Caco-2 (cell line): ENCODE measurements at regions of chr11 and their contacts with region 1.

Region 1: GRCh38 chr11:61639816-61640443 is 40.3 kb upstream of the DAGLA start:
- DNase-seq: no peak
- H3K4me3 ChIP-seq: no peak overlapping the region
- H3K4me3 Mint-ChIP-seq: no peak overlapping the region
- H3K27ac Mint-ChIP-seq: no peak overlapping the region
- H3K4me1 ChIP-seq: 0 out of 2 replicates have a peak, but pooled peaks cover 4% of the 10 kb centered on the region
- H3K4me1 Mint-ChIP-seq: no peaks in the 10 kb centered on the region
- H3K27me3 ChIP-seq: no peaks in the 10 kb centered on the region
- H3K27me3 Mint-ChIP-seq: no peaks in the 10 kb centered on the region
- CTCF ChIP-seq: no peak

Region 2: GRCh38 chr11:61509043-61510029 is 130.6 kb before region 1 on chr11:
- CTCF ChIA-PET with region 1: interaction called, 10 read pairs
- POLR2A ChIA-PET with region 1: no interaction called
- intact Hi-C with region 1: no loop called
- DNase-seq: peak; percentile 82 to 87
- H3K4me3 ChIP-seq: peak overlapping the region; percentile 52
- H3K4me3 Mint-ChIP-seq: peak overlapping the region; percentile 80
- H3K27ac Mint-ChIP-seq: no peak overlapping the region
- H3K4me1 ChIP-seq: peaks cover 37% of the 10 kb centered on the region
- H3K4me1 Mint-ChIP-seq: peaks cover 27% of the 10 kb centered on the region
- H3K27me3 ChIP-seq: no peaks in the 10 kb centered on the region
- H3K27me3 Mint-ChIP-seq: peaks cover 5% of the 10 kb centered on the region
- CTCF ChIP-seq: peak; percentile 59 to 71

Region 3: DNA sequence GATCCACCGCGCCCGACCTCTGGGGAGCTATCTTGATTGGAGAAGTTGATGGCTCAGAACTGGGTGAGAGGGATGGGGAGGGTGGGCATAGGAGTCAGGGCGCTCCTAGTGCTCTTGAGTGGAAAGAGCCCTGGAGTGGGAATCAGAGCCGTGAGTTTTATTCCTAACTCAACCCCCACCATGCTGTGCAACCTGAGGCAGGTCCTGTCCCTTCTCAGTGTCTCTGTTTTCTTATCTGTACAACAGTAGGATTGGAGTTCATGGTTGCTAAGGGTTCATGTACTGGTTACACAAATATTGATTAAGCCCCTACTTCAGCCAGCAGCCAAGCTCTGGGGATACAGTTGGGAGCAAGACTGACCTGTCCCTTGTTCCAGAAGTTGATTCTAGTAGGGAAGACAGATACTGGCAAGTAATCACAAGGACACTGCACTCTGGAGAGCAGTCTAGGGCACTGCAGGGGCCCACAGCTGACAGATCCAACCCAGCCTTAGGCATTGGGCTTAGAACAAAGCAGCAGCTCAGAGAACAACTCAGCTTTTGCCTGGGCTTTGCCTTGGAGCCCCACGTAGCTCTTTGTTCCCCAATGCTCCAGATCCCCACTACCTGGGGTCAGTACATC is 27.9 kb after region 1 on chr11:
- CTCF ChIA-PET with region 1: interaction called, 11 read pairs
- POLR2A ChIA-PET with region 1: interaction called, 4 read pairs
- intact Hi-C with region 1: no loop called
- DNase-seq: peak; percentile 43 to 54
- H3K4me3 ChIP-seq: peak overlapping the region; percentile 47
- H3K4me3 Mint-ChIP-seq: peak overlapping the region; percentile 84
- H3K27ac Mint-ChIP-seq: peak overlapping the region; percentile 88
- H3K4me1 ChIP-seq: peaks cover 46% of the 10 kb centered on the region
- H3K4me1 Mint-ChIP-seq: peaks cover 21% of the 10 kb centered on the region
- H3K27me3 ChIP-seq: no peaks in the 10 kb centered on the region
- H3K27me3 Mint-ChIP-seq: no peaks in the 10 kb centered on the region
- CTCF ChIP-seq: peak; percentile 24 to 36

Region 4: DNA sequence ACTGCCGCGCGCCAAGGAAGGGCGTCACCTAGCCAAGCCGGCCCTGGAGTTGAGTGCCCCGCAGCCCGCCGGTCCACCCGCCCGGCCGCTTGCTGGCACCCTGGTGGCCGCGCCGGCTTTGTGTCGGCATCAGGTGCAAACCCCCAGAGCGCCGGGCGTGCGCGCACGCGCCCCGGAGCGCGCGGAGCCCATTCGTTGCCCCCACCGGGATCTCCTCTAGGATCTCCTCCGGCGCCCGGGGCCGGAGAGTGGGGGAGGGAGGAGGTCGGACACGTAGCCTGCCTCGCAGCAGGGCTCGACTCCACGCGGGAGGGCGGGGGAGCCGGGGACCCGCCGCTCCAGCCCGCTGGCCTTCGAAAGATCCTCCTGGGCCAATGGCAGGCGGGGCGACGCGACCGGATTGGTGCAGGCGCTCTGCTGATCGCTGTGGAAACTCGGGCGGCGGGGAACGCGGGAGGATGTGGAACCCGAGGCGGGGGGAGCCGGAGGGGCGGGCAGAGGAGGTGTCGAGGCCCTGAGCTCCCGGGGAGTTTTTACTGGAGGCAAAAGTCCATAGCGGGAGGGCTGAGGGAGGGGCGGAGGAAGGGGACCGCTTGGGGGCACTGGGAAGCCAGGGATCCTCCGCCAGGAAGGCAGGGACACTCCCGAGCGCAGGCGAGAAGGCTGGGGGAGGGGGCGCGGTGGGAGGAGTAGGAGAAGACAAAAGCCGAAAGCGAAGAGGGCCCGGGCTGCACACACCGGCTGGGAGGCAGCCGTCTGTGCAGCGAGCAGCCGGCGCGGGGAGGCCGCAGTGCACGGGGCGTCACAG is 187.8 kb after region 1 on chr11 and contains the start of gene FADS2:
- CTCF ChIA-PET with region 1: no interaction called
- POLR2A ChIA-PET with region 1: no interaction called
- intact Hi-C with region 1: no loop called
- DNase-seq: peak; percentile 75 to 77
- H3K4me3 ChIP-seq: peak within 1 kb of the TSS; percentile 64
- H3K4me3 Mint-ChIP-seq: peak within 1 kb of the TSS; percentile 86
- H3K27ac Mint-ChIP-seq: peak within 1 kb of the TSS; percentile 39
- H3K4me1 ChIP-seq: peaks cover 30% of the 10 kb centered on the region
- H3K4me1 Mint-ChIP-seq: peaks cover 14% of the 10 kb centered on the region
- H3K27me3 ChIP-seq: no peaks in the 10 kb centered on the region
- H3K27me3 Mint-ChIP-seq: no peaks in the 10 kb centered on the region
- CTCF ChIP-seq: peak in 1 of 2 experiments; percentile 8
- total RNA-seq, gene FADS2: 30.6 and 36.3 TPM in 2 replicates